ENCODE measurements at regions of chr1 and their contacts with region 1.

Region 1: DNA sequence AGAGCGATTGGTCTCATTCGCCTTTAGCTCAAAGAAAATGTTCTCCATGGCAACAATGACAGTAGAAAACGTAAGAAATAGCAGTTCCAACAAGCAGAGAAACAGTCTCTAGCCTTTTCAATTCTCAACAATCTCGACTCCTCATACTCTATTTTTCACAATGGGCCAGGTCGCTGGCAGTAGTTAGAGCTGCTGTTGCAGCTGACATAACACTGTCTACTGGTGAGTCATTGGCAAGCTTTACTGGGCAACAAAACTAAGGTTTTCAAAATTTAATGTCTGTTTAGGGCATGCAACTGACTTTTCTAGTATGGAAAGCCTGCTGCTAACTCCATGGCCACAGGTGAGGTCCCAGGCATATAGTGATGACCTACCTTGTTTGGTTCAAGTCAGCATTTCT is 221.1 kb upstream of the KAZN start:
- DNase-seq: no peak
- H3K4me3 ChIP-seq: no peak overlapping the region
- H3K27ac ChIP-seq: no peak overlapping the region
- H3K4me1 ChIP-seq: peaks cover 0 to under 1% (median 0%) of the 10 kb centered on the region in 4 experiments; a peak in 2 of 7 replicates
- H3K27me3 ChIP-seq: no peaks in the 10 kb centered on the region
- CTCF ChIP-seq: no peak
- EP300 ChIP-seq: no peak
- POLR2A ChIP-seq: no peak
- RAD21 ChIP-seq: no peak

Region 2: GRCh38 chr1:14366091-14367018 is 11.0 kb before region 1 on chr1:
- CTCF ChIA-PET with region 1: interaction called, 17 read pairs
- POLR2A ChIA-PET with region 1: no interaction called
- DNase-seq: peak in 1 of 2 experiments; percentile 56
- H3K4me3 ChIP-seq: no peak overlapping the region
- H3K27ac ChIP-seq: no peak overlapping the region
- H3K4me1 ChIP-seq: peaks cover 2 to 16% (median 11%) of the 10 kb centered on the region in 4 experiments
- H3K27me3 ChIP-seq: no peaks in the 10 kb centered on the region
- CTCF ChIP-seq: peak in 2 of 3 experiments; percentile 4 to 35; a peak in 1 of 4 replicates
- EP300 ChIP-seq: no peak
- POLR2A ChIP-seq: no peak
- RAD21 ChIP-seq: peak in 1 of 2 experiments; percentile 37; a peak in 2 of 4 replicates

Measured in H1 (cell line).